Activated CD4-positive, alpha-beta memory T cell treated with anti-CD3 and anti-CD28 coated beads for 36 hours (primary cell): ENCODE measurements at regions of chr13 and their contacts with region 1.

Region 1: GRCh38 chr13:65959305-65959704 is 1270.8 kb downstream of the PCDH9 start:
- DNase-seq: no peak
- H3K4me3 Mint-ChIP-seq: no peak overlapping the region
- H3K27ac Mint-ChIP-seq: no peak overlapping the region
- H3K4me1 Mint-ChIP-seq: no peaks in the 10 kb centered on the region
- H3K27me3 Mint-ChIP-seq: no peaks in the 10 kb centered on the region

Region 2: GRCh38 chr13:66700059-66700690 is 740.9 kb after region 1 on chr13:
- CTCF ChIA-PET with region 1: no interaction called
- POLR2A ChIA-PET with region 1: no interaction called
- intact Hi-C with region 1: loop called (anchors 5 kb)
- DNase-seq: no peak
- H3K4me3 Mint-ChIP-seq: no peak overlapping the region
- H3K27ac Mint-ChIP-seq: no peak overlapping the region
- H3K4me1 Mint-ChIP-seq: no peaks in the 10 kb centered on the region
- H3K27me3 Mint-ChIP-seq: no peaks in the 10 kb centered on the region

Region 3: DNA sequence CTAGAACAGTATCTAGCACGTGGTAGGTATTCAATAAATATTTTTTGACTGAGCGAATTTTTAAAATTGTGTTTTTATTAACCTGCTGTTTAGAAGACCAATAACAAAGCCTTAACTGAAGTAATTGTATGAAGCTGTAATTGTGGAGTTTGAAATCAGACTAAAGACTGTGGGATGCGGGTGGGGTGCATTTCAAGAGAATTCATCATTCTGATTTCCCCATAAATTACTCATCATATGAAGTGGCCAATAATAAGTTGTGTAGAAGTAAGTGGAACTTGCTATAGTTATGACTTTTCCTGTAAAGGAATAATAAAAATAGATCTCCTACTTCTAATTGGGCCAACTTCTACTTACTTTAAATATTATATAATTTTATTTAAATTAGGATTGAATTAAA is 821.5 kb after region 1 on chr13:
- CTCF ChIA-PET with region 1: no interaction called
- POLR2A ChIA-PET with region 1: no interaction called
- intact Hi-C with region 1: no loop called
- DNase-seq: no peak
- H3K4me3 Mint-ChIP-seq: no peak overlapping the region
- H3K27ac Mint-ChIP-seq: no peak overlapping the region
- H3K4me1 Mint-ChIP-seq: no peaks in the 10 kb centered on the region
- H3K27me3 Mint-ChIP-seq: no peaks in the 10 kb centered on the region